Calu3 (cell line): ENCODE measurements at regions of chr20 and their contacts with region 1.

Region 1: DNA sequence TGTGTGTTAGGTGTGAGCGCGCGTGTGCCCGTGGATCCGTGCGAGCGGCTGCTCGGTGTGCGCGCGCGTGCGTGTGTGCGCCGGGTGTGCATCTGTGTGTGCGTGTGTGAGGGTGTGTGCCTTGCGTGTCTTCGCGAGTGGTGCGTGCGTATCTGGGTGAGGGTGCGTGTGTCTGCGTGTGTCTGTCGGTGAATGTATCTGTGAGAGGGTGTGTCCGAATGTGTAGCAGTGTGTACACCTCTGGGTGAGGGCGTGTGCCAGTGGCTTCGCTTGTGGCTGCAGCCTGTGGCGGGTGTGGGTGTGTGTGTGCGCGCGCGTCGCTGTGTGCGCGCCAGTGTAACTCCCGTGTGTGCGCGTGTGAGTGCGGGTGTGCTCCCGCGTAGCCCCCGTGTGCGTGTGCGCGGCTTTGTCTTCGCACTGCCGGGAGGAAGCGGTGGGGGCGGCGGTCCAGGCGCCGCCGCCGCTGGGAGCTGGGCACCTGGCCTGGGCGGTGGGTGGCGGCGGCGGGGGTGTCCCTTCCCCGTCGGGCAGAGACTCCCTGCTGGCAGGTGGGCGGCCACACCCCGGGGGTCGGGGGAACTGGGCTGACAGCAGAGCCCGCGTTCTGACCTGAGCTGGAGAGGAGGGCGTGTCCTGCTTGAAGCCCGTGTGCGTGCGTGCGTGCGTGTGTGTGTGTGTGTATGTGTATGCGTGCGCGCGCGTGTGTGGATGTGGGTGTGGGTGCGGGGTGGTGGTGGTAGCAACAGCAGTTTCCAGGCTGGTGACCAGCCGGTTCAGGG is 61.3 kb upstream of the EPB41L1 start:
- DNase-seq: peak; percentile 84
- H3K4me3 Mint-ChIP-seq: peak overlapping the region; percentile 94
- H3K27ac Mint-ChIP-seq: peak overlapping the region; percentile 72
- H3K4me1 Mint-ChIP-seq: peaks cover 63% of the 10 kb centered on the region
- H3K27me3 Mint-ChIP-seq: no peaks in the 10 kb centered on the region
- CTCF ChIP-seq: no peak

Region 2: DNA sequence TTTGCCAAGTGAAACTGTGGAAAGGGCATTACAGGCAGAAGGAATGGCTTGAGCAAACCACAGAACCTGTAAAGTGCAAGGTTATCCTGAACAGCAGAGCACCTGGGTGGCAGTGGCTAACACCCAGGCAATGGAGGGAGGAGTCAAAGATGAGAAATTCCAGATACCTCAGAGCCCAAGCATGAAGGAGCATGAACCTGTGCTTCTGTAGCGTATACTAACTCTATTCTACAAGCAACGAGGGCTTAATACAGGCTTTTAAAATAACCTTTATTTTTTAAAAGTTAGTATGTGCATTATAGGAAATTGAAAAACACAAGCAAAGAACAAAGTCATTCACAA is 47.9 kb before region 1 on chr20:
- CTCF ChIA-PET with region 1: interaction called, 3 read pairs
- intact Hi-C with region 1: loop called (anchors 5 kb)
- DNase-seq: no peak
- H3K4me3 Mint-ChIP-seq: no peak overlapping the region
- H3K27ac Mint-ChIP-seq: no peak overlapping the region
- H3K4me1 Mint-ChIP-seq: peaks cover 42% of the 10 kb centered on the region
- H3K27me3 Mint-ChIP-seq: no peaks in the 10 kb centered on the region
- CTCF ChIP-seq: no peak

Region 3: DNA sequence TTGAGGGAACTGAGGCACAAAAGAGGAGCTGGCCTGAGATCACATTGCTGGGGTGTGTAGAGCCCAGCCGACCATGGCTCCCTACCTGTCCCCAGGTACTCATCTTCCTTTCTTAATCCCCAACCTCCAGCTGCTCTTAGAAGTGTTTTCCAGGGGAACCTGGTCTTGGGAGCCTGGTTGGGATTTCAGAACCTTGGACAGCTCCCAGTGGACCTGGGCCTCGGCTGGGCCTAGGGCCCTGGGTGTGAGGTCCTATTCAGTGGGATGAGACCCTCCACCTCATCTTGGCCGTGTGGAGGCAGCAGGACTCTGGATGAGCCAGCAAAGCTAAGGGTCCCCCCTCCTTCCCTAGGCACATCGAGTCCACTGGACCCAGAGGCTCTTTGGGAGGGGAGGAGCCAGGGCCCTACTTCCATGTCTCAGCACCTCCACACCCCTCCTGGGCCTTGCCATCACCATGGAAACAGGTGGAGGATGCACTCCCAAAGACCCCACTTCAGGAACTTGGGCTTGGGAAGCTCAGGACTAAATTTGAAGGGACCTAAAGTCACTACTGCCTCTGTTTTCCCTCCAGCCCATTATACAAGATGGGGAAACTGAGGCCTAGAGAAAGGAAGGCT is 251.4 kb after region 1 on chr20:
- CTCF ChIA-PET with region 1: no interaction called
- intact Hi-C with region 1: no loop called
- DNase-seq: peak; percentile 67
- H3K4me3 Mint-ChIP-seq: no peak overlapping the region
- H3K27ac Mint-ChIP-seq: no peak overlapping the region
- H3K4me1 Mint-ChIP-seq: no peaks in the 10 kb centered on the region
- H3K27me3 Mint-ChIP-seq: peaks cover 91% of the 10 kb centered on the region
- CTCF ChIP-seq: no peak